ENCODE measurements at regions of chr2 and their contacts with region 1.

Region 1: DNA sequence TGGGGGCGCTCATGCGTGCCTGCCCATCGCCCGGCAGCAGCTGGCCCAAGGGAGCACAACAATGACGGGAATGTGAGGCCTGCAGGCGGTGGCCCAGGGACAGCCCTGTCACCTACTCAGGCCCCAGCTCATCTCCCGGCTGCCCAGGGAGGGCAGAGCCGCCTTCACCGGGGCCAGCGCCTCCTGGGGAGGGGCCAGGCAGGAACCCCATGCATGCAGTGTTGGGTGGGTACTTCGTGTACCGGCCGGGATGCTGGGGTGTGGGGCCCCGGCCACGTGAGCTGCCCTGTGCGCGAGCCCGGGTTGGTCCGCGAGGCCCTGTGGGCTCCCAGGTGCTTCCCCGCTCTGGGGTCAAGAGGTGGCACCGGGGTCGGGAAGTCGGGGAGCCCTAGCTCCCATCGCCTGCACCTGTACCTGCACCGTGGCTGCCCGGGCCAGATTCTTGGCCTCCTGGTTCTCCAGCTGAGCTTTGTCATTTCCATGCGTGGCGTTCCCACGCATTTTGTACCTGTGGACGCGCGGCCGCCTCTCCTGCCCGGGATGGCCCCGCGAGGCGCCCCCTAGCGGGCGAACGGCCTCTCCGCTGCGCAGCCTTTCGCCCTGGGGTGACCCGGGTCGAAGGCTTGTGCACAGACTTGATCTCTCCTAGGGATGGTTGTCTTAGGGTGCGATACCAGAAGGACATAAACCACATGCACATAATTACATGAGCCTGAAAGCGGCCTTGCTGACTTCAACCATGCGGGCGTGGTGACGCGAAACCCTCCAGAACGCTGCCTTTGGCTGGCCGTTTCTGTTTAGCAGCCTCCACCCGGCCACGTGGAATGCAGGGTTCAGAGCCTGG is 950 bp downstream of the KLHL30 start:
- DNase-seq: peak in 1 of 2 experiments; percentile 86
- H3K4me3 ChIP-seq: no peak overlapping the region
- H3K27ac ChIP-seq: no peak overlapping the region
- H3K4me1 ChIP-seq: no peaks in the 10 kb centered on the region
- H3K27me3 ChIP-seq: no peaks in the 10 kb centered on the region
- CTCF ChIP-seq: peak in 2 of 3 experiments; percentile 70 to 91; a peak in 3 of 4 replicates
- EP300 ChIP-seq: no peak
- POLR2A ChIP-seq: no peak
- RAD21 ChIP-seq: peak; percentile 46 to 57

Region 2: DNA sequence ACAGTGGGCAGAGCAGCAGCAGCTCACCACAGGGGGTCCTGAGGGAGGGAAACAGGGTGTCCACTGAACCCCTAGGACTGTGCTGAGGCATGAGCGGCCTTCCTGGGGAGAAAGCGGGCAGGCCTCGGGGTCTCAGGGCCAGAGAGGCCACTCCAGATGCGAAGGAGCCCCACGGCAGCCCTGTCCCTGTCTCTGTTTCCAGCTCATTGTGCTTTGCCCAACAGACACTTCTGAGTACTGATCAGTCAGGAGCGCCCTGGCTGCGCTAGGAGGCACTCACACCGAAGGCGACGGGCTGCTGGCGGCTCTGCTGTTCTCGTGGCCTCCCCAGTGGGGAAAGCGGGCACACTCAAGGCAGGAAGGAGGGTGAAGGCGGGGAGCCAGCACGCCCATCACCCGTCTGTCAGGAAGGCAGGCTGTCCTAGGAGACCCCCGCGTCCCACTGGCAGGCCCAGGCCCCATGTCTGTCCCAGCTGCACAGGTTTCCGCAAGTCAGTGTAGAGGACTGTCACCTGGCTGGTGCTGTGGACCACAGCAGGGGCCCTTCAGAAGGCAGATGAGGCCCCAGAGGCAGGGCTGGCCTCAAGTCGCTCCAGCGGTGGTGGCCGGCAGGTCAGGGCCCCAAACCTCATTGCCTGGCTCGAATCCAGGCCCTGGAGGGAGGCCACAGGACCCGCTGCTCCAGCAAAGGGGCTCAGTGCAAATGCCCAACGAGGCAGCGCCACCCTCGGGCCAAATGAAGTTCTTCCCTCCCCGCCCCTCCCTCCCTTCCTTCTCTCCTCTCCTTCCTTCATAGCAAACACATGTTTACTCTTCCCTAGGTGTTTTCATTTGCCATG is 32.5 kb before region 1 on chr2:
- CTCF ChIA-PET with region 1: interaction called, 24 read pairs
- POLR2A ChIA-PET with region 1: no interaction called
- DNase-seq: peak in 1 of 2 experiments; percentile 75
- H3K4me3 ChIP-seq: no peak overlapping the region
- H3K27ac ChIP-seq: no peak overlapping the region
- H3K4me1 ChIP-seq: peaks cover 0 to 16% (median 7%) of the 10 kb centered on the region in 4 experiments; a peak in 6 of 7 replicates
- H3K27me3 ChIP-seq: no peaks in the 10 kb centered on the region; a peak in 1 of 7 replicates
- CTCF ChIP-seq: peak in 2 of 3 experiments; percentile 46 to 50; a peak in 2 of 4 replicates
- EP300 ChIP-seq: no peak
- POLR2A ChIP-seq: no peak
- RAD21 ChIP-seq: peak; percentile 66 to 67

Region 3: GRCh38 chr2:238120463-238121298 is 18.7 kb before region 1 on chr2:
- CTCF ChIA-PET with region 1: interaction called, 27 read pairs
- POLR2A ChIA-PET with region 1: interaction called, 3 read pairs
- DNase-seq: no peak
- H3K4me3 ChIP-seq: no peak overlapping the region
- H3K27ac ChIP-seq: no peak overlapping the region
- H3K4me1 ChIP-seq: peaks cover 0 to 6% (median 2%) of the 10 kb centered on the region in 4 experiments; a peak in 3 of 7 replicates
- H3K27me3 ChIP-seq: no peaks in the 10 kb centered on the region; a peak in 1 of 7 replicates
- CTCF ChIP-seq: peak in 2 of 3 experiments; percentile 11 to 21; a peak in 3 of 4 replicates
- EP300 ChIP-seq: no peak
- POLR2A ChIP-seq: no peak
- RAD21 ChIP-seq: peak; percentile 24 to 50; a peak in 3 of 4 replicates

Region 4: DNA sequence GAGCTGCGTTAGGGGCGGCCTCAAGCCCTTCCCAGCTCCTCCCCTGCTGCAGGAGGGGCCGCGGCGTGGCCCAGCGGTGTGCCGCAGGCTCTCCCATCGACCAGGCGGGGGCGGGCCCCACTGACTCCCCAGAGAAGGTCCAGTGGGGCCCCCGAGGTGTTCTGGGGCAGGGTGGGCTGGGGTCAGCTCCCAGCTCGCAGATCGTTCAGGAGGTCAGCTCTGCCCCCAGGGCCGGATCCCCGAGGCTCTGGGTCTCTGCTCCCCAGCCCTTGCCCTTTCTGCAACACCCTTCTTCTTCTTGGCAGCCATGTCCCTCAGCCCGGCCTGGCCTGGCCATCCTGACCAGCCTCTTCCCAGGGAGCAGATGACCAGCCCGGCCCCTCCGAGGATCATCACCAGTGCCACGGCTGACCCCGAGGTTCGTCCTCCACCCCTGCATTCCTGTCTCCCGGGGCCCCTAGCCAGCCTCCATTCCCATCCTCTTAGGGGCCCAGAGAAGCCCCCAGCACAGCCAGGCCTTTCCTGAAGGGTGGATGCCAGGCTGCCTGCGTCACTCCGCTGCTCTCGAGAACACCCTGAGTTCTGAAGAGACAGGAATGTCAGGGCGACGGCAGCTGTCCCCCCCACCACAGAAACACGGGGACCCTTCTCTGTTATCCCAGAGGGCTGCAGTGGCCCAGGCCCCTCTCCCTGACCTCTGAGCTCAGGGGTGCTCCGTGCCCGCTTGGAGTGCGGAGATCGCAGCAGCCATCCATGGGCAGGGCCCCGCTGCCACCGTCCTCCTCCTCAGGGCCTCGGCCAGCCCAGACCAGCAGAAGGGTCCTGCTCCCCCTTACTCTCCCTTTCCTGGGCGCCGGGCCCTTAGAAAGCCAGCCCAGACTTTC is 11.9 kb before region 1 on chr2:
- CTCF ChIA-PET with region 1: interaction called, 41 read pairs
- POLR2A ChIA-PET with region 1: interaction called, 3 read pairs
- DNase-seq: no peak
- H3K4me3 ChIP-seq: no peak overlapping the region
- H3K27ac ChIP-seq: no peak overlapping the region
- H3K4me1 ChIP-seq: peaks cover 0 to 13% (median 0%) of the 10 kb centered on the region in 4 experiments; a peak in 2 of 7 replicates
- H3K27me3 ChIP-seq: no peaks in the 10 kb centered on the region
- CTCF ChIP-seq: no peak
- EP300 ChIP-seq: no peak
- POLR2A ChIP-seq: no peak
- RAD21 ChIP-seq: no peak; a peak in 1 of 4 replicates

Region 5: DNA sequence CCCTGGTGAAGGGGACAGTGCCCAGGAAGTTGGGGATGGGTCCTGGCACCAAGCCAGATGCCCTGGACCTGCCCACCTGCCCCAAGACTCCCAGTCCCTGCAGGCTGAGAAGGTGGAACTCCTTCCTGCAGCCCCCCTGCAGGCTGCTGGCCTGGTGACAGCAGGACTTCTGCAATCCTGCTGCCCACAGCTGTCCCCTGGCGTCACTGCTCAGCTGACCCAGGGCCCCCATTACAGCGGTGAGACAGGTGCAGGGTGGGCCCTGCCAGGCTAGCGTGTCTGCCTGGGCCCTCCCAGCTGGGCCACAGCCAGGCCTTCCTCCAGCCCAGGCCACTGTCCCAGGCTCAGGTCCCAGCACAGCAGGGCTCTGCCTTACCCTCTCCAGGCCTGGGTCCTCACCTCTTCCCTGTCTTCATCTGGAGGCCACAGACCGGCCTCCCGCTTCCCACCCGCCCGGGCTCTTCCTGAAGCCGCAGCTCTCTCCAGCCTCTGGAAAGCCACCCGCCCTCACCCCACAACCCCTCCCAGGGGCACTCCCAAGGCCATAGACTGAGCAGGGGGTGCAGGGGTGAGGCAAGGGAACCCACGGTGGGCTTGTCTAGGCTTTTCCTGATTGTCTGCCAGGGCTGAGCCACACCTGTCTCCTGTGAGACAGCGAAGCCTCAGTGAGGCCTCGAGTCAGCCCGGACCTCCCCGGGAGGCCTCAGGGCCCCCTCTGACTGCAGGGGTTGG is 10.6 kb after region 1 on chr2:
- CTCF ChIA-PET with region 1: interaction called, 72 read pairs
- POLR2A ChIA-PET with region 1: interaction called, 3 read pairs
- DNase-seq: no peak
- H3K4me3 ChIP-seq: no peak overlapping the region
- H3K27ac ChIP-seq: no peak overlapping the region
- H3K4me1 ChIP-seq: peaks cover 0 to 9% (median 5%) of the 10 kb centered on the region in 4 experiments; a peak in 6 of 7 replicates
- H3K27me3 ChIP-seq: peaks cover 0 to 2% (median under 1%) of the 10 kb centered on the region in 4 experiments; a peak in 1 of 7 replicates
- CTCF ChIP-seq: no peak
- EP300 ChIP-seq: no peak
- POLR2A ChIP-seq: no peak
- RAD21 ChIP-seq: no peak

Region 6: DNA sequence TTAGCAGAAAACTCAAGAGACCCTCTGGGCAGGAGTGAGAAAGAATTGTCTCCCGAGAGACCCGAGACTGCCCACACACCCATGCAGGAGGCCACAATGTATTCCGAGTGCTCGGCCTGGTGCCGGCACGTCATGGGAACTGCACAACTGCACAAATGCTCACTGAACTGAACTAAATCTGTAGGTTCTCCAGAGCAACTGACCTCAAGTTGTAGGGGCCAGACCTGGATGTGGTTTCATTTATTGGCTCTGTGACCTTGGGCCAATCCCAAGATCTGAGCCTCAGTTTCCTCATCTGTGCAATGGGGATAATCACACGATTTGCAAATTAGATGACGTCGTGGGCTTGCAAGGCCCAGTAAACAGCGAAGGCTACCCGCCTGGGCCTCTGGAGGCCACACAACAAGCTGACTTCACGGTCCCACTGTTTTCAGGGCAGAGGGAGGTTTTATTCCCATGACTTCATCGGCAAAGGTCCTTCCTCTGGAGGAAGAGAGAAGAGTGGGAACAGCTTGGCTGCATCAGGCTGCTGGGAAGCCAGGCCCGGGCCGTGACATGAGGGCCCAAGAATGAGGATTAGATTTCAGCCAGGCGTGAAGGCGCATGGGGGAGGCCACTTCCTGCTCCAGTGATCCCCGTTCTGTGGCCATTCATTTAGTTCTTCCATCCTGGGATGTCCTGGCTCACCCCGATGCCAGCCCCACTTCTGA is 15.8 kb after region 1 on chr2:
- CTCF ChIA-PET with region 1: interaction called, 72 read pairs
- POLR2A ChIA-PET with region 1: interaction called, 3 read pairs
- DNase-seq: no peak
- H3K4me3 ChIP-seq: no peak overlapping the region
- H3K27ac ChIP-seq: no peak overlapping the region
- H3K4me1 ChIP-seq: peaks cover 0 to 27% (median 11%) of the 10 kb centered on the region in 4 experiments; a peak in 6 of 7 replicates
- H3K27me3 ChIP-seq: peaks cover 2 to 29% (median 20%) of the 10 kb centered on the region in 4 experiments
- CTCF ChIP-seq: no peak
- EP300 ChIP-seq: no peak
- POLR2A ChIP-seq: no peak
- RAD21 ChIP-seq: no peak

Region 7: DNA sequence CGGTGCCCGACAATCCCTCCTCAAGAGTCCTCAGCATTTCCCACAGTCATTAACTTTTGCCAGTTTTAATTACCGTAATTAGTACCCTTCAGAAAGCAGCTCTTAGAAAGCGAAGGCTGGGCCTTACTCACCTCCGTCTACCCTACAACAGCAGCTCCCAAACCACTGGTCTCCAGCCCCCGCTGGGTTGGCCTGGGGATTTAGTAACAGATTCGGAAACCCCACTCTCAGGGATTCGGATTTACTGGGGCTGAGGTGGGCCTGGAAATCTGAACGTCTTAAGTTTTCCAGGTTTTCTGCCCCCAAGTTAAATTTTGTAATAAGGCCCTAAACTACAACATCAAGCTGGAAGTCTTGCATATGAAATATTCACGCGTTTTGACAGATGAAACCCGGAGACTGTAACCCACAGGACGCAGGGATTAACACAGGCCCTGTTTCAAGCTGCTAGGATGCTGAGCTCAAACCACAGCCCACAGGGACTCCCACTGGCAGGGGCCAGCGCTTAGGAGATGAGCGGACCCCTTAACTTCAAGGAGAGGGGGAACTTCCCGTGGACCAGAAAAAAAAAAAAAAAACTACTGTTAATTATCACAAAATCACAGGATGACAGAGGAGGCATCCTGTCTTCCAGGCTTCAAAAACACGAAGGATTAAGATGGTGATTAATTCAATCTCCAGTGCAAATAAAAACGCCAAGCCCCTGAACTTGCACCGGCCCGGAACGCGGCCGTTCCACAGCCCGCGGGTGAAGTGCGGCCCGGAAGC is 63.1 kb after region 1 on chr2:
- CTCF ChIA-PET with region 1: interaction called, 10 read pairs
- POLR2A ChIA-PET with region 1: no interaction called
- DNase-seq: no peak
- H3K4me3 ChIP-seq: peak overlapping the region; percentile 65 to 94 (median 72)
- H3K27ac ChIP-seq: no peak overlapping the region
- H3K4me1 ChIP-seq: peaks cover 2 to 7% (median 4%) of the 10 kb centered on the region in 4 experiments; a peak in 5 of 7 replicates
- H3K27me3 ChIP-seq: peaks cover 0 to 6% (median under 1%) of the 10 kb centered on the region in 4 experiments; a peak in 1 of 7 replicates
- CTCF ChIP-seq: no peak
- EP300 ChIP-seq: no peak
- POLR2A ChIP-seq: no peak
- RAD21 ChIP-seq: no peak

Measured in H1 (cell line).